ENCODE measurements at regions of chr14 and their contacts with region 1.

Region 1: DNA sequence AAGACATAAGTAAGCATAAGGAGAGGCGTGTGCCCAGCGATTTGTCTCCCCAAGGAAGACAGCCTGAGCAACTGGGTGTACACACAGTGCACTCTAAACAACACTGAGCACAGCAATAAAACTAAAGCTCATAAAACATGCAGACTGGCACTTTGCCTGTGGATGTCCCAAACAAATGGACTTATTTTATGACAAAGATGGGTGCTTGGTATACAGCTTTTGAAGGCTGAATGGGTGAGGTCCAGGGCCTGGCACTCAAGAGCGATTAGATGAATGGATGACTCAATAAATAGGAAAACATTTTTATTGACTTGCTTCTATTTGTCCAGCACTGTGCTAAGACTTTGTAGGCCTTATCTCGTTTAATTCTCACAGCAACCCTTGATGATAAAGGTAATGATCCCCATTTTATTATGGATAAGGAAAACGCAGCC is 28.5 kb downstream of the LGMN start:
- DNase-seq: no peak
- H3K4me3 ChIP-seq: no peak overlapping the region
- H3K27ac ChIP-seq: no peak overlapping the region
- H3K4me1 ChIP-seq: no peaks in the 10 kb centered on the region
- H3K27me3 ChIP-seq: no peaks in the 10 kb centered on the region
- CTCF ChIP-seq: no peak
- POLR2A ChIP-seq: no peak

Region 2: GRCh38 chr14:92783816-92784431 is 64.0 kb after region 1 on chr14:
- intact Hi-C with region 1: loop called (anchors 2 kb)
- DNase-seq: no peak
- H3K4me3 ChIP-seq: no peak overlapping the region
- H3K27ac ChIP-seq: no peak overlapping the region
- H3K4me1 ChIP-seq: peaks cover 0 to 9% (median 0%) of the 10 kb centered on the region in 6 donors
- H3K27me3 ChIP-seq: no peaks in the 10 kb centered on the region
- CTCF ChIP-seq: peak; percentile 24 to 72 (median 69)
- POLR2A ChIP-seq: no peak